Stomach (tissue), 19 donors: ENCODE measurements at regions of chr1 and their contacts with region 1.

Region 1: DNA sequence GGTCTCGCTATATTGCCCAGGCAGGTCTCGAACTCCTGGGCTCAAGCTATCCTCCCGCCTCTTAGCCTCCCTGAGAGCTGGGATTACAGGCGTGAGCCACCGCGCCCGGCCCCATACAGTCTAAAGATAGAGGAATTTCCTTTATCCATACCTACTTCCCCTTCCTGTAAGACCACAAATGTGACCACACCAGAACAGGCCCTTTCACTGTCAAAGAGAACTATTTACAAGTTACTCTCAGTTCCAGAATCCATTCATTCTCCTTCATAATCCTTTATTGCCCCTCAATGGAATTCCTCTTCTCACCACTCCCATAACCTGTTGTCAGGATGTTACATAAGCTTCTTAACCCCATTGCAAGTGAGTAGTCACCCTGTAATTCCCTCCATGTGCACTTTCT is 26.3 kb upstream of the SLC5A9 start:
- DNase-seq: no peak
- H3K4me3 ChIP-seq: no peak overlapping the region
- H3K27ac ChIP-seq: no peak overlapping the region
- H3K4me1 ChIP-seq: no peaks in the 10 kb centered on the region
- H3K27me3 ChIP-seq: no peaks in the 10 kb centered on the region
- CTCF ChIP-seq: no peak
- EP300 ChIP-seq: no peak
- POLR2A ChIP-seq: no peak

Region 2: DNA sequence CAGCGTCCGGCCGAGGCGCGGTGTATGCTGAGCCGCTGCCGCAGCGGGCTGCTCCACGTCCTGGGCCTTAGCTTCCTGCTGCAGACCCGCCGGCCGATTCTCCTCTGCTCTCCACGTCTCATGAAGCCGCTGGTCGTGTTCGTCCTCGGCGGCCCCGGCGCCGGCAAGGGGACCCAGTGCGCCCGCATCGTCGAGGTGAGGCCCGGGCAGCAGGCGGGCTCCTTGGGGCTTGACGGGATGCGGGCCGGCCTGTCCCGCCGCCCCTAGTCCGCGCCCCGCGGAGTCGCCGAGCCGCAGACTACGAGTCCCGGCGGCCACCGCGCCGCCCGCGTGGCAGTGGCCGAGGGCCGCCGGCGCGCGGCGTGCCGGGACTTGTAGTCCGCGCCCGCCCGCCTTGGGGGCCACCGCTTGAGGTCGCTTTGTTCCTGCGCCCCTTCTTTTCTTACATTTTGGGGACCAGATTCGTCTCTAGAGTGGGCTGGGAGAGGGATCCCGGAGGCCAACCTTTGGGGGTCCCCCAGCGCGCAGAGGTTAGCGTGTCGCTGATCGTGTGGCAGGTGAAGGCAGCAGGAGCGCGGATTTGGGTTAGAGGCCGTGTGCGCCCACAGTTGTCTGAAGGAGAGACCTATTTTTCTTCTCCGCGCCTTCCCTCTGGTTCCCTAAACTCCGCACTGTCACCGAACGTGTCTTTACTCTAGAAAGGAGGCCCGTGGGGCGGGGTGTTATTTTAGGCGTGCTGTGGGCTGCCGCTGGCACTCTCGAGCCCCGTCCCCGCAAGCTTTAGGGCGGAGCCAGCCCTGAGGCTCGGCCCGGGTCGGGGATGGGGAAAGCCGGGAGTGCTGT is 862.1 kb before region 1 on chr1:
- intact Hi-C with region 1: no loop called
- DNase-seq: peak; percentile 80 to 95
- H3K4me3 ChIP-seq: peak overlapping the region; percentile 66 to 98 (median 91)
- H3K27ac ChIP-seq: peak overlapping the region; percentile 97 to 100 (median 99)
- H3K4me1 ChIP-seq: peaks cover 21 to 60% (median 49%) of the 10 kb centered on the region in 4 donors
- H3K27me3 ChIP-seq: no peaks in the 10 kb centered on the region
- CTCF ChIP-seq: peak in 1 of 7 experiments; percentile 12
- EP300 ChIP-seq: no peak
- POLR2A ChIP-seq: no peak

Region 3: DNA sequence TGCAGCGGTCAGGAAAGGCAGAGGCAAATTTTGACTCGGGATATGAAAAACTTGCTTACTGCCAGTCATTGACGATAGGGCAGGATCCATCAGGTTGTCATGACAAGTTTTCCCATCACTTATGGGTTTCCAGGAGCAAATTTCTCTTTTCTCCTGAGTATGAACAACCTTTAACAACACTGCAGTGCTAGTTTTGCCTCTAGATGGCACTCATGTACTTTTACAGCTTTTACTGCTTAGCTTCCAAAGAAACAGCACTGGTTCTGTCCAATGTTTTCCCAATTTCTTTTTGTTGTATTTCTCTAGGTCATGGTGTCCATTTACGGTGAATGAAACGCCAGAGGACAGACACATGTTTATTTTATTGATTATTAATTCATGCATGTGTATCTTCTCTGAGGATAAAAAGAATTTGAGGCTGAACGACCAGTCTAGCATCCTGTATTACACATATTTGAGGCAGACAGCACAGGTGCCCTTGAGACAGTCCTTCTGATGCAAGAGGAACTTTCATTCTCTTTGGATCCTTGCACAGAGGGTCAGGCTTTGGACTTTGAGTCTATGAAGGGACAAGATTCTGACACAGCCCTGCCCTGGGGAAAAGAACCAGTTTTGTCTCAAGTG is 86.7 kb before region 1 on chr1:
- intact Hi-C with region 1: loop called (anchors 5 kb)
- DNase-seq: peak in 1 of 2 donors; percentile 86
- H3K4me3 ChIP-seq: no peak overlapping the region
- H3K27ac ChIP-seq: no peak overlapping the region
- H3K4me1 ChIP-seq: no peaks in the 10 kb centered on the region
- H3K27me3 ChIP-seq: no peaks in the 10 kb centered on the region
- CTCF ChIP-seq: peak in 5 of 7 experiments; percentile 65 to 77 (median 75)
- EP300 ChIP-seq: no peak
- POLR2A ChIP-seq: no peak